CD8-positive, alpha-beta T cell (primary cell): ENCODE measurements at regions of chr19 and their contacts with region 1.

Region 1: DNA sequence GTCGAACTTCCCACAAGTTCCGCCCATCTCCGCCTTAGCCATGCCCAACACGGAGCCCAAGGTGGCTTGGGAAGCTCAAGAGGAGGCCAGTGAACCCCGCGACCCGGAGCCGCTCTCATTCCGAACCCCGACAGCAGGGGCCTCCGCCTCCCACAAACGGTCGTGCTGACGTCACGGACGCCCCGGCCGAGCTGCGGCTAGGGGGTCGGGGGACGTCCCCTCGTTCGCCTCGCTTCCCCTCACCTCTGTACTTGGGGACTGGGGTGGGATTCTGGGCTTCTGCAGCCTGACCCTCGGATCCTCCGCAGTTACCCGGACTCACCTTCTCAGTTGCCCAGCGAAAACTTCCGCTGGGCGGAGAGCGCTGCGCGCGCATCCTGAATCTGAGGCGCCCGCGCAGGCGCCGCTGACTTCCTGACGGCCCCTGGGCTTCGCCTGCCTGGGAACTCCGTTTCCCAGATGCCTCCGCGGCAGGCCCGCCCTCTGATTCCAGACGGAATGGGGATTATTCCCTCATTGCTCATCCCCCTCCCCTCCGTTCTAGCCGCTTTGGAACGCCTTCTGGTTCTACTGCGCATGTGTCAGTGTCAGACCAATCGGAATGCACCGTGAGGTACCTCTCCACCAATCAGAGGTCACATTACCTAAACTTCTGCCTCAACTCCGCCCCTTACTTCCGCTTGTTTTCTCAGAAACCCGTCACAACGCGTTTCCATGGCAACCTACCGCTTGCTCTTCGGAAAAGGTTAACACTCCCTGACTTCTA is at the start of gene VRK3:
- DNase-seq: peak; percentile 95 to 100 (median 97)
- ATAC-seq: peak; percentile 86
- H3K4me3 ChIP-seq: peak within 1 kb of the TSS; percentile 88 to 98
- H3K4me3 Mint-ChIP-seq: peak within 1 kb of the TSS; percentile 90
- H3K27ac ChIP-seq: peak within 1 kb of the TSS; percentile 98
- H3K27ac Mint-ChIP-seq: peak within 1 kb of the TSS; percentile 98
- H3K4me1 ChIP-seq: peaks cover 29% of the 10 kb centered on the region
- H3K4me1 Mint-ChIP-seq: peaks cover 53% of the 10 kb centered on the region
- H3K27me3 ChIP-seq: no peaks in the 10 kb centered on the region
- H3K27me3 Mint-ChIP-seq: no peaks in the 10 kb centered on the region
- CTCF ChIP-seq: no peak
- total RNA-seq, gene VRK3: 71.1 to 73.1 TPM

Region 2: GRCh38 chr19:50050384-50051224 is 25.4 kb after region 1 on chr19:
- CTCF ChIA-PET with region 1: interaction called, 6 read pairs
- POLR2A ChIA-PET with region 1: interaction called, 9 read pairs
- intact Hi-C with region 1: loop called (anchors 1 kb)
- DNase-seq: peak; percentile 66 to 92 (median 80)
- ATAC-seq: peak; percentile 88
- H3K4me3 ChIP-seq: peak overlapping the region; percentile 58 to 64
- H3K4me3 Mint-ChIP-seq: peak overlapping the region; percentile 90
- H3K27ac ChIP-seq: peak overlapping the region; percentile 74 to 77
- H3K27ac Mint-ChIP-seq: peak overlapping the region; percentile 85
- H3K4me1 ChIP-seq: peaks cover 8% of the 10 kb centered on the region
- H3K4me1 Mint-ChIP-seq: peaks cover 17% of the 10 kb centered on the region
- H3K27me3 ChIP-seq: no peaks in the 10 kb centered on the region
- H3K27me3 Mint-ChIP-seq: peaks cover 5% of the 10 kb centered on the region
- CTCF ChIP-seq: no peak